ENCODE measurements at regions of chr11 and their contacts with region 1.

Region 1: GRCh38 chr11:20110908-20111669 is 49.2 kb downstream of the DBX1 start:
- DNase-seq: peak in 1 of 2 donors; percentile 49
- H3K4me3 ChIP-seq: no peak overlapping the region
- H3K27ac ChIP-seq: peak overlapping the region; percentile 84 to 91
- H3K4me1 ChIP-seq: no peaks in the 10 kb centered on the region
- H3K27me3 ChIP-seq: no peaks in the 10 kb centered on the region
- CTCF ChIP-seq: peak; percentile 48 to 69 (median 58)
- POLR2A ChIP-seq: no peak

Region 2: DNA sequence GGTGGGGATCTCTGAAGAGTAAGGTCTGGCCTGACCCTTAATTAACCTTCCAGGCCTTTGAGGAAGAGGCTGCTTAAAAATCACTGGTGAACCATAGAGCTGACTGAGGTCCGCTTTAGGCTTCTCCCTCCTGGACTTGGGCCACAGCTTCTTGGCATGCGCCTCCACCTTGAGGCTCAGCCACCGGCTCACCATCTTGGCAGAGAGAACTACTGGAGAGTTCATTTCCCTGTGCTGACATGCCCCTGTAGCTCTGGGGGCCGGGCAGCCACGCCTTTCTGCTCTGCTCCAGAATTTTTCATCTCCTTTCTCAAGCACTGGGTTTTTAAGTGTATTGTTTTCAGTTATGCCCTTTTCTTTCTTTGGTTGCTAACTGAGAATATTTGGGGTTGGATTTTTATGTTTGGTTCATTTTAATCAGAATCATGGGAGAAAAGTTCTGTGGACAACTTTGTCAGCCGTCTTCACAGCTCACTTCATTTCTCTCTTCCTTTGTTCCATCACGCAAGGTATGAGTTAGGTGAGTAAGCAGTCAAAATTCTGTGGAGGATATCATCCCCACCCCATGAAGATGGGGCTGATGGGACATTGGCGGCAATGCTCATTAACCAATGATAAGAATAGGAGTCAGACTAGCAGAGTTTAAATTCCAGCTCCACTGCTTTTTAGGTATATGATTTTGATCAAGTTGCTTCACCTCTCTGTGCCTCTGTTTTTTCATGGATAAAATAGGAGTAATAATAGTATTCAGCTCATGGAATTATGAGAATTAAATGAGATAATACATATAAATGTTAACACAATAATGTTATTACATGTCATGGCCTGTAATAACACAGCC is 54.8 kb before region 1 on chr11:
- intact Hi-C with region 1: loop called (anchors 10 kb)
- DNase-seq: peak; percentile 63 to 69
- H3K4me3 ChIP-seq: no peak overlapping the region
- H3K27ac ChIP-seq: peak overlapping the region; percentile 66 to 73
- H3K4me1 ChIP-seq: no peaks in the 10 kb centered on the region
- H3K27me3 ChIP-seq: no peaks in the 10 kb centered on the region
- CTCF ChIP-seq: no peak
- POLR2A ChIP-seq: no peak